Activated naive CD4-positive, alpha-beta T cell treated with anti-CD3 and anti-CD28 coated beads for 36 hours (primary cell): ENCODE measurements at regions of chr2 and their contacts with region 1.

Region 1: DNA sequence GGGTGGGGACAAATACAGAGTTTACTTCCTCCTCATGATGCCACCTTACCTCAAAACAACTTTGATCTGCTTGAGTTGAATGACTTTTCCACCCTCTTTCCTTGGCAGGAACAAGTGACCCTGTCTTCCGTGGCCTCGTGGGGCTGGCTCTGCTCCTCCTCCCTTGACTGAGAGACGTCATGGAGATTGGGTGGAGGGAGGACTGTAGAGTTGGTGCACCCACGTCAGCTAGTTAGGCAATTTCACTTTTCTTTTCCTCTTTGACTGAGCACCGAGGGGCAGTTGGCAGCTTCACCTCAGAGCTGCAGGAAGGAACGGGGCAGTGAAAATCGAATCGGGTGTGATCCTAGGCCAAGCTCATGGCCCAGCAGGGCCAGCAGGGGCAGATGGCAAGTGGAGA is at the start of gene SP140:
- DNase-seq: peak; percentile 87
- H3K4me3 Mint-ChIP-seq: peak within 1 kb of the TSS; percentile 81
- H3K27ac Mint-ChIP-seq: peak within 1 kb of the TSS; percentile 97
- H3K4me1 Mint-ChIP-seq: peaks cover 62% of the 10 kb centered on the region
- H3K27me3 Mint-ChIP-seq: no peaks in the 10 kb centered on the region
- total RNA-seq, gene SP140: 95.1 to 98.8 TPM

Region 2: DNA sequence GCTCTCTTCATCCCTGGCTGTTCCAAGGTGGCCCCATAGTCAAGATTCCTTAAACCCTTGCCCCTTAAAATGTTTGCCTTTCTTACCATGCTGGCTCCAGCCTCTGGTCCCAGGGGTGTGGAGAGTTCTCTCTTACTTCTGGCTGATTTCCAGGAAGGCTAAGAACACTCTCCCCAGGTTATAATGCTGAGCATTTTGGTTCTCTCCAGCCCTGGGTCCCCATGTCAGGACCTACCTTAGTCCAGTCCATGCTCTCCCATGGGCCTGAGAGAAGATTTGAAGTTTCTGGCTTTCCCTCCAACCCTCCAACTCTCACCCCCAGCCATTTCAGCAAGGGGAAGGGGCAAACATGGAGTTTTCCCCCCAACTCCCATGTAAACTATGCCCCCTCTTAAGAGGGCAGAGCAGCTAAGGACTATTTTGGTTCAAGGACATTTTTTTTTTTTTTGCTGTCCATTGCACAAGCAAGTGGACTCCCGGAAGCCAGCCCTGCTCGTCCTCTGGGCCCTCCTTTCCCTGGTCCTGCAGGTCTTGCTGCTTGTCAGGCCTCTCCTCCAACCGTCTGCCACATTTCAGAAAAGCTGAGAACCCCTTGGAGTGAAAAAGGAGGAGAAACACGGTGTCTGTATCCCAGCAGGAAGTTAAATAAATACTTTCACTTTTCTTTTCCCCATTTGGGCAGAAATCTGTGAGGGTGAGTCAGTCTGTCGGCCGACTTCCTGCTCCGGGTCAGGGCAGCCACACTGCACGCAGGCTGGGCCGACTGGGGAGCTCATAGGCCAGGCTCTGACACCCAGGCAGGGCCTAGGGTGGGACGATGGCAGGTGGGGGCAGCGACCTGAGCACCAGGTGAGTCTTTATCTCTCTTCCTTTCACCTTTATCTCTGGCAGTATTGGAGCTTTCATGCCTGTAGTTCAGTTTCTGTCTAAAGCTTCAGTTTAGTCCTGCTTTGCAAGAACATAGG is 101.2 kb after region 1 on chr2 and contains the start of gene SP140L:
- CTCF ChIA-PET with region 1: no interaction called
- intact Hi-C with region 1: loop called (anchors 1 kb)
- DNase-seq: peak; percentile 88
- H3K4me3 Mint-ChIP-seq: peak within 1 kb of the TSS; percentile 96
- H3K27ac Mint-ChIP-seq: peak within 1 kb of the TSS; percentile 99
- H3K4me1 Mint-ChIP-seq: peaks cover 60% of the 10 kb centered on the region
- H3K27me3 Mint-ChIP-seq: no peaks in the 10 kb centered on the region
- total RNA-seq, gene SP140L: 41.8 to 44.7 TPM

Region 3: DNA sequence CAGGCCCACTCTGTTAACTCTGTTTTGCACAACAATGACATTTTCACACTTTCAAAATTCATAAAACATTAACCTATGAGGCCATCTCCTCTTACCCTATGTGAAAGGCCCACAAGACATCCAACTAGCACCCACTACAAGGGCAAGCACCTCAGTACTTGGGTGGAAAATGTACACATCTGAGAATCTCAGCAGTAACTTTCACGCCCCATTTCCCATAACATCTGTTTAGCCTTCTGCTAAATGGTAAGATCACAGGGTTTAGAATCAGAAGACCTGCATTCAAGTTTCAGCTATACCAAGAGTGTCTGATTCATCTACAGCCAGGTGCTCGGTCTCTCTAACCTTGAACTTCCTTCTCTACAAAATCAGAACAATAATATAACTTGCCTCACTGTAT is 279.7 kb after region 1 on chr2:
- CTCF ChIA-PET with region 1: no interaction called
- intact Hi-C with region 1: no loop called
- DNase-seq: no peak
- H3K4me3 Mint-ChIP-seq: no peak overlapping the region
- H3K27ac Mint-ChIP-seq: no peak overlapping the region
- H3K4me1 Mint-ChIP-seq: peaks cover 9% of the 10 kb centered on the region
- H3K27me3 Mint-ChIP-seq: no peaks in the 10 kb centered on the region